RWPE1 (cell line): ENCODE measurements at regions of chr1 and their contacts with region 1.

Region 1: GRCh38 chr1:92858564-92859399 is 26.9 kb downstream of the RPL5 start:
- DNase-seq: peak; percentile 84
- H3K27ac ChIP-seq: no peak overlapping the region
- CTCF ChIP-seq: peak; percentile 92

Region 2: GRCh38 chr1:92994105-92994712 is 135.4 kb after region 1 on chr1:
- CTCF ChIA-PET with region 1: interaction called, 28 read pairs
- POLR2A ChIA-PET with region 1: no interaction called
- DNase-seq: peak; percentile 60
- H3K27ac ChIP-seq: no peak overlapping the region
- CTCF ChIP-seq: peak; percentile 83